Activated naive CD4-positive, alpha-beta T cell treated with anti-CD3 and anti-CD28 coated beads for 36 hours (primary cell): ENCODE measurements at regions of chr16 and their contacts with region 1.

Region 1: DNA sequence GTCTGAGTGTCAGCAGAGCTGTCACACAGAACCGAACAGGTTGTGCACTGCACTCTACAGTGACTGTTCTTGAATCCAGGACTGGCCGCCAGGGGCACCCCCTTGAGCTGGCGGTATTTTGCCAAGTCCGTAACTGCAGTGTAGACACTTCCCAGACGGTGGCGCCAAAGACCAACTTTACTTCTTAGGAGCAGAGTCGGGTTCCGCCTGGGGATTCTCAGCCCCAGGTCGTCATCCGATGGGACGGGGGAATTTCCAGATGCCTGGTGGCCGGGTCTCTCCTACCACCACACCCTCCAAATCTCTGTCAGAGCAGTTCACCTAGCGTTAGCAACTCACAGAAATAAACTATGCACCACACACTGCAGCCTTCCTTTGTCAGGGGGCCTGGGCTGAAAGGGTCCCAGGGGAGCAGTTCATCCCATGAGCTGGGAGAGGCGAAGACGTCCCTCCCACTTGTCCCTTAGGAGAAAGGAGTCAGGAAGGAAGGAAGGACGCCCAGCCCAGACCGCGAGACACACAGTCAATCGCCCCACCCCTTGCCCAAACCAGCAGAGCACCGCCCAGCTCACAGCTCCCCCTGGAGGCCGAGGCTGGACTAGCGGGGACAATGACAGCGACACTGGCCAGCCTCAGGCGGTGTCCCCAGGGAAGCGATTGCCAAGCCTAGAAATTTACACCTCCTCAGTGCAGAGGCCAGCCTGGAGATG is 7.4 kb upstream of the RIPOR1 start:
- DNase-seq: peak; percentile 100
- H3K4me3 Mint-ChIP-seq: peak overlapping the region; percentile 84
- H3K27ac Mint-ChIP-seq: peak overlapping the region; percentile 96
- H3K4me1 Mint-ChIP-seq: peaks cover 11% of the 10 kb centered on the region
- H3K27me3 Mint-ChIP-seq: no peaks in the 10 kb centered on the region

Region 2: DNA sequence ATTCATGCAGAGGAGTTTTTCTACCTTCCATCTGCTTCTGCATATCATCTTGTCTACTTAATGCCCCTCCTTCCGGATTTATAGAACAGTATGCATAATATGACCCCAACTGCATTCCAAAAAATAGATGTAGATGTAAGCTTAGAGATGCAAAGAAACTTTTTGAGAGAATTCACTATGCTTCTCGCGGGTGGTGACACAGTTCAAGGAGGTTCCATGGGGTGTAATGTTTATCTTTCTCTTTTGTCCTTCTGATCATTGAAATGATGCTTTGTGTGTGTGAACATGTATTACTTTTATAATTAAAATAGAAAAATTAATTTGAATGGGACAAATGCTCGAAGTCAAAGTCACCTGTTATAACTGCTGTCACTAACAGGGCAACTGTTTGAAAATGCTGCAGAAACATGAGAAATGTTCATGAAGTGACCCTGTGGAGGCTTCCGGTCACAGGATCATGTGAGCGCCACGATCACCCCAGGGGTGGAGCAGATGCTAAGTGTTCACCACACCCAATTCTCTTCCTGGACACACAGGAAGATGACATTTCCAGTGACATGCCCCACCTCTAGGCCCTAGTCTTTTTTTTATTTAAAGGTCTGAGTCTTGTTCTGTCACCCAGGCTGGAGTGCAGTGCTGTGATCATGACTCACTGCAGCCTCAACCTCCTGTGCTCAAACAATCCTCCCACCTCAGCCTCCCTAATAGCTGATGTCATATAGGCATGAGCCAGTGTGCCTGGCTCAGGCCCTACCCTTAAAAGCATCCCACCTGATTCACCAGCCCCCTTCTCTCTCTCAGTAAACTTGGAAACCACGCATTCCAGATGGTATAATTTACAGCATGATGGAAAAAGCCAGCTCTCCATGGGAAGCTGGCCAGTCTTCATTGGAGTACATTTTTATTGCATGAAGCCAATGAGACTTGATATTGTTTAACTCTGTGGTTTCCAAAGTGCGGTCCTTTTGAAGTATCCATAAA is 16.9 kb before region 1 on chr16:
- CTCF ChIA-PET with region 1: interaction called, 17 read pairs
- intact Hi-C with region 1: no loop called
- DNase-seq: peak; percentile 75
- H3K4me3 Mint-ChIP-seq: no peak overlapping the region
- H3K27ac Mint-ChIP-seq: peak overlapping the region; percentile 64
- H3K4me1 Mint-ChIP-seq: peaks cover 49% of the 10 kb centered on the region
- H3K27me3 Mint-ChIP-seq: no peaks in the 10 kb centered on the region

Region 3: DNA sequence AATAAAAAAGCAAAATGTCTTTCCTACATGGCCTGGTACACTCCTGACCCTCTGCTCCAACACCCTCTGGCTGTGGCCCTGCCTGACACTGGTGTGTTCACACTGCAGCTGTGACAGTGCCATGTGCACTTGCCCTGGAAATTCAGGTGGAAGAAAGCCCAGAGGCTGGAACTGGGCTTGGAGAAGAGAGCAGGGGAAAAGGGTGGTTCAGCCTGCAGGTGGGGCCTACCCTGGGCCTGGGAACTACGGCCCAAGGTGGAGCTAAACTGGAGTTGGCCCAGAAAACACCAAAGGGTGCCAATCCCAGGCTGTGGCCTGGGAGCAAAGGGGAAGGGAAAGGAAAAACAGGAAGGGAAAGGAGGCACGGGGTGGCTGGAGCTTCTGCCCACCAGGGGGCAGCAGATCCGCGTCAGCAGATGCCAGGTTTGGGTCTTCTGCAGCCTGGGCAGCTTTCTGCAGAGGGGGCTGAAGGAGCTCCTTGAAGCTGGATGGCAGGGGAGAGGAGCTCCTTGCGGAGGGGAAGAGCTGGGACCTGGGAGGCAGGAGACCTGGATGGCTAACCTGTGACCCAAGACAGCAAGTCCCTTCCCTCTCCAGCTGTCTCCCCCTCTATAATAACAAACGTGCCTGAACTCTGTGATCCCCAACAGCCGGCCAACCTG is 25.6 kb after region 1 on chr16:
- CTCF ChIA-PET with region 1: interaction called, 29 read pairs
- intact Hi-C with region 1: no loop called
- DNase-seq: peak; percentile 81
- H3K4me3 Mint-ChIP-seq: peak overlapping the region; percentile 14
- H3K27ac Mint-ChIP-seq: peak overlapping the region; percentile 91
- H3K4me1 Mint-ChIP-seq: peaks cover 34% of the 10 kb centered on the region
- H3K27me3 Mint-ChIP-seq: no peaks in the 10 kb centered on the region

Region 4: GRCh38 chr16:67641779-67642708 is 120.8 kb after region 1 on chr16:
- CTCF ChIA-PET with region 1: interaction called, 84 read pairs
- intact Hi-C with region 1: loop called (anchors 1 kb)
- DNase-seq: no peak
- H3K4me3 Mint-ChIP-seq: no peak overlapping the region
- H3K27ac Mint-ChIP-seq: no peak overlapping the region
- H3K4me1 Mint-ChIP-seq: peaks cover 9% of the 10 kb centered on the region
- H3K27me3 Mint-ChIP-seq: no peaks in the 10 kb centered on the region

Region 5: GRCh38 chr16:67667817-67668494 is 146.7 kb after region 1 on chr16:
- CTCF ChIA-PET with region 1: interaction called, 131 read pairs
- intact Hi-C with region 1: loop called (anchors 1 kb)
- DNase-seq: peak; percentile 91
- H3K4me3 Mint-ChIP-seq: peak overlapping the region; percentile 90
- H3K27ac Mint-ChIP-seq: no peak overlapping the region
- H3K4me1 Mint-ChIP-seq: peaks cover 17% of the 10 kb centered on the region
- H3K27me3 Mint-ChIP-seq: no peaks in the 10 kb centered on the region

Region 6: DNA sequence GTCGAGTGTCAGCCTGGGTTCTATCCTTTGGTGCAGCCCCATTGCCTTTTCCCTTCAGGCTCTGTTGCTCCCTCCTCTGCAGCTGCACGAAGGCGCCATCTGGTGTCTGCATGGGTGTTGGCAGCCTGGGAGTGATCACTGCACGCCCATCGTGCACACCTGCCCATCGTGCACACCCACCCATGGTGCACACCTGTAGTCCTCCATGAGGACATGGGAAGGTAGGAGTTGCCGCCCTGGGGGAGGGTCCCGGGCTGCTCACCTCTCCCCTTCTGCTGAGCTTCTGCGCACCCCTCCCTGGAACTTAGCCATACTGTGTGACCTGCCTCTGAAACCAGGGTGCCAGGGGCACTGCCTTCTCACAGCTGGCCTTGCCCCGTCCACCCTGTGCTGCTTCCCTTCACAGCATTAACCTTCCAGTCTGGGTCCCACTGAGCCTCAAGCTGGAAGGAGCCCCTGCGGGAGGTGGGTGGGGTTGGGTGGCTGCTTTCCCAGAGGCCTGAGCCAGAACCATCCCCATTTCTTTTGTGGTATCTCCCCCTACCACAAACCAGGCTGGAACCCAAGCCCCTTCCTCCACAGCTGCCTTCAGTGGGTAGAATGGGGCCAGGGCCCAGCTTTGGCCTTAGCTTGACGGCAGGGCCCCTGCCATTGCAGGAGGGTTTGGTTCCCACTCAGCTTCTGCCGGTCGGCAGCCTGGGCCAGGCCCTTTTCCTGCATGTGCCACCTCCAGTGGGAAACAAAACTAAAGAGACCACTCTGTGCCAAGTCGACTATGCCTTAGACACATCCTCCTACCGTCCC is 407.5 kb after region 1 on chr16:
- CTCF ChIA-PET with region 1: interaction called, 4 read pairs
- intact Hi-C with region 1: loop called (anchors 2 kb)
- DNase-seq: peak; percentile 91
- H3K4me3 Mint-ChIP-seq: no peak overlapping the region
- H3K27ac Mint-ChIP-seq: no peak overlapping the region
- H3K4me1 Mint-ChIP-seq: peaks cover 2% of the 10 kb centered on the region
- H3K27me3 Mint-ChIP-seq: no peaks in the 10 kb centered on the region